A673 (cell line): ENCODE measurements at regions of chr19 and their contacts with region 1.

Region 1: DNA sequence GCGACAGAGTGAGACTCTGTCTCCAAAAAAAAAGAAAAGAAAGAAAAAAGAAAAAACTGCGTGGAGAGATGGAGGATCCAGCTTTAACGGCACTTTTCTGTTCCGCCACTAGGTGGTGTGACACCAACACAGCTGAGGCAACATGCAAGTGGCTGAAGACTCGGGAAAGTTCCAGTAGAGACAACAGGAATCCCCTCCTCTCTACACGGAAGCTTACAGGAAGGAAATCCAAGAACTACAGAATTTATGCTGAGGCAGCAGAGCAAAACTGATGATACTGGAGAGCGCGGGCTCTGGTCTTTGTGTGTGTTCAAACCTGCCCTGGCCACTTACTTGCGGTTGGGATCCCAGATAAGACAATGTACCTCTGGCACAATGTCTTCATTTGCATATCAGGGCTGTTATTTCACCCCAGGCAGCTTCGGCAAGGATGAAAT is 9.9 kb downstream of the RANBP3 start:
- DNase-seq: peak; percentile 89
- H3K4me3 ChIP-seq: no peak overlapping the region
- H3K27ac ChIP-seq: peak overlapping the region; percentile 75
- H3K4me1 ChIP-seq: peaks cover 25% of the 10 kb centered on the region
- H3K27me3 ChIP-seq: no peaks in the 10 kb centered on the region
- CTCF ChIP-seq: peak; percentile 92

Region 2: GRCh38 chr19:5789351-5789761 is 178.7 kb before region 1 on chr19:
- CTCF ChIA-PET with region 1: no interaction called
- POLR2A ChIA-PET with region 1: interaction called, 10 read pairs
- intact Hi-C with region 1: no loop called
- DNase-seq: no peak
- H3K4me3 ChIP-seq: no peak overlapping the region
- H3K27ac ChIP-seq: no peak overlapping the region
- H3K4me1 ChIP-seq: peaks cover 7% of the 10 kb centered on the region
- H3K27me3 ChIP-seq: no peaks in the 10 kb centered on the region
- CTCF ChIP-seq: no peak

Region 3: DNA sequence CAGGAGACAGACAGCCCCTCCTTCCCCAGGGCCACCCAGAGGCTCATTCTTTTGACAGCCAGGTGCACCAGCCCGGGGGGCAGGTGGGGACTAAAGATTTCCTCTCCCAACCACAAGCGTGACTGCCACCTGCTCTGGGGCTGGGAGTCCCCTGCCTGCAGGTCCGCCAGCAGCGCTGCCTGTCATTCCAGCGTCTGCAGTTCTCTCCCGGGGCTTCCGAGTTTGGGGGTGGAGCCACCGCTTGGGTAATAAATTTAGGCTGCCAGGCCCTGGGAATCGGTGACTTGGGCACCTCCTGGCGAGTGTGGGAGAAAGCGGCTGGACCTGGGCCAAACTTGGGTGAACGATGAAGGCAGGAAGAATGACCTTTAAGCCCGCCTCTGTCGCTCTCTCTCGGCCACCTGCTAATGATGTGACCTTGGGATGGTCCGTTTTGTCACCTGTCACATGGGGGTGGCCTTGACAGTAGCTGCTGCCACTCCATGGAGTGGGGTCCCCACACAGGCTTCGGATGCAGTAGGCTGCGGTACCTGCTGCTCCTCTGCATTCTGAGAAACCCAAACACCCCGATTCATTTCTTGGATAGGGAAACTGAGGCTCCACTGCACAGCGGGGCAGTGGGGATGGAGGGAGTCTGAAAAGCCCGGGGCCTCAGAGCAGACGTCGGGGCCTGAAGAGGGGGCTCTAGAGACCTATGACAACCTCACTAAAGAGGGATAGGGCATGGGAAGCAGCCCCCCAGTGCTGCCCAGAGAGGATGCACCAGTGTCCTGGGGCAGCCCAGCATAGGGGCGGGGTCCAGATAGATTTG is 141.3 kb before region 1 on chr19:
- CTCF ChIA-PET with region 1: no interaction called
- POLR2A ChIA-PET with region 1: no interaction called
- intact Hi-C with region 1: no loop called
- DNase-seq: peak; percentile 93
- H3K4me3 ChIP-seq: peak overlapping the region; percentile 61
- H3K27ac ChIP-seq: peak overlapping the region; percentile 51
- H3K4me1 ChIP-seq: peaks cover 22% of the 10 kb centered on the region
- H3K27me3 ChIP-seq: no peaks in the 10 kb centered on the region
- CTCF ChIP-seq: peak; percentile 59

Region 4: DNA sequence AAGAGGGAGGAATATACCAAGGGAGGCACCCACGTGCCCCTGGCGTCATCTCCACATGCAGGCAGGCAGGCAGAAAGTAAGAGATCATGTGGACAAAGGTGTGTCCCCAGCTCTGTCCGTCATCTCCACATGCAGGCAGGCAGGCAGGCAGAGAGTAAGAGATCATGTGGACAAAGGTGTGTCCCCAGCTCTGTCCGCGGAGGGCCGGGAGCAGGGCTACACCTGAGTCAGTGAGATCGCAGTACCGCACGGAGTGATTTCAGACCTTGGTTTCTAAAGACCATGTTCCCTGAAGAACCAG is 31.8 kb before region 1 on chr19:
- CTCF ChIA-PET with region 1: interaction called, 12 read pairs
- POLR2A ChIA-PET with region 1: no interaction called
- intact Hi-C with region 1: no loop called
- DNase-seq: no peak
- H3K4me3 ChIP-seq: no peak overlapping the region
- H3K27ac ChIP-seq: no peak overlapping the region
- H3K4me1 ChIP-seq: no peaks in the 10 kb centered on the region
- H3K27me3 ChIP-seq: no peaks in the 10 kb centered on the region
- CTCF ChIP-seq: no peak